Esophagus muscularis mucosa (tissue), 4 donors: ENCODE measurements at regions of chr1 and their contacts with region 1.

Region 1: GRCh38 chr1:51768971-51769588 is 109.4 kb downstream of the NRDC start:
- DNase-seq: no peak
- H3K4me3 ChIP-seq: no peak overlapping the region
- H3K27ac ChIP-seq: no peak overlapping the region
- H3K4me1 ChIP-seq: peaks cover 0 to 7% (median 2%) of the 10 kb centered on the region in 4 donors
- H3K27me3 ChIP-seq: no peaks in the 10 kb centered on the region
- CTCF ChIP-seq: peak; percentile 84 to 88 (median 86)
- EP300 ChIP-seq: no peak
- POLR2A ChIP-seq: no peak

Region 2: GRCh38 chr1:51627678-51628077 is 141.4 kb before region 1 on chr1:
- intact Hi-C with region 1: loop called (anchors 5 kb)
- DNase-seq: no peak
- H3K4me3 ChIP-seq: no peak overlapping the region
- H3K27ac ChIP-seq: no peak overlapping the region
- H3K4me1 ChIP-seq: peaks cover 18 to 69% (median 44%) of the 10 kb centered on the region in 4 donors
- H3K27me3 ChIP-seq: no peaks in the 10 kb centered on the region
- CTCF ChIP-seq: peak; percentile 26 to 52 (median 43)
- EP300 ChIP-seq: no peak
- POLR2A ChIP-seq: no peak